Activated CD4-positive, alpha-beta T cell treated with anti-CD3 and anti-CD28 coated beads for 36 hours (primary cell): ENCODE measurements at regions of chr6 and their contacts with region 1.

Region 1: DNA sequence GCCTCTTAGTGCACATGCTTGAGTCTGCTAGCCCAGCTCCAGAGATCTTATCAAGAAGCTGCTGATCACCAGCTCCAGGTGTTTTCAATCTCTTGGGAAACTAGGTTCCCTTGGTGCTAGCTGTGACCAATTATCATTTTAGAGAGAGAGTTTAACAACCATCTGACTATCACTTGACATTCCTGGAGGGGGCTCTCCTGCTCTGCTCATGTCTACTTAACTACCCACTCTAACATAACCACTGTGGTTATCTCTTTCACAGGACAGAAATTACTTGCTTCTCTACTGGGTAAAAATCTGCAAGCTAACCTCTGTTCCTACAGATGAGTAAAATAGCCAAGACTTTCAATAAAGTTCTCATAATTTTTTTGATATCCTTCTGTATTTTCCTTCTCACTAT is 823.4 kb upstream of the GJE1 start:
- DNase-seq: peak; percentile 13
- ATAC-seq: peak; percentile 65
- H3K4me3 Mint-ChIP-seq: no peak overlapping the region
- H3K27ac Mint-ChIP-seq: no peak overlapping the region
- H3K4me1 Mint-ChIP-seq: peaks cover 9% of the 10 kb centered on the region
- H3K27me3 Mint-ChIP-seq: peaks cover 4% of the 10 kb centered on the region

Region 2: GRCh38 chr6:141195251-141195832 is 114.0 kb before region 1 on chr6:
- CTCF ChIA-PET with region 1: no interaction called
- POLR2A ChIA-PET with region 1: no interaction called
- intact Hi-C with region 1: no loop called
- DNase-seq: no peak
- ATAC-seq: no peak
- H3K4me3 Mint-ChIP-seq: no peak overlapping the region
- H3K27ac Mint-ChIP-seq: no peak overlapping the region
- H3K4me1 Mint-ChIP-seq: no peaks in the 10 kb centered on the region
- H3K27me3 Mint-ChIP-seq: peaks cover 2% of the 10 kb centered on the region

Region 3: DNA sequence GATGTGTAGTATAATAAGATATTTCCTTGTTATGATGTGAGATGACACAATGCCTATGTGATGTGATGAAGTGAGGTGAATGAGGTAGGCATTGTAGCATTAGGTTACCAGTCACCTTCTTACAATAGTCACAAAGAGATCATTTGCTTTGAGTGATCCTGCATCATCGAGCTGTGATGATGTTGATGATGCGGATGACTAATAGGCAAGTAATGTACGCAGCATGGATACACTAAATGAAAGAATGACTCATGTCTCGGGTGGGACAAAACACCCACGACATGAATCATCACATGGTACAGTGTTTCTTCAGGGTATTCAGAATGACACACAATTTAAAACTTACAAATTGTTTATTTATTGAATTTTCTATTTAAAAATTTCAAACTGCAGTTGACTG is 17.1 kb after region 1 on chr6:
- CTCF ChIA-PET with region 1: no interaction called
- POLR2A ChIA-PET with region 1: interaction called, 4 read pairs
- intact Hi-C with region 1: loop called in 1 of 2 experiments (anchors 1 kb)
- DNase-seq: peak; percentile 73
- ATAC-seq: peak; percentile 100
- H3K4me3 Mint-ChIP-seq: no peak overlapping the region
- H3K27ac Mint-ChIP-seq: no peak overlapping the region
- H3K4me1 Mint-ChIP-seq: peaks cover 19% of the 10 kb centered on the region
- H3K27me3 Mint-ChIP-seq: peaks cover 3% of the 10 kb centered on the region